Mammary epithelial cell (primary cell): ENCODE measurements at regions of chr4 and their contacts with region 1.

Region 1: DNA sequence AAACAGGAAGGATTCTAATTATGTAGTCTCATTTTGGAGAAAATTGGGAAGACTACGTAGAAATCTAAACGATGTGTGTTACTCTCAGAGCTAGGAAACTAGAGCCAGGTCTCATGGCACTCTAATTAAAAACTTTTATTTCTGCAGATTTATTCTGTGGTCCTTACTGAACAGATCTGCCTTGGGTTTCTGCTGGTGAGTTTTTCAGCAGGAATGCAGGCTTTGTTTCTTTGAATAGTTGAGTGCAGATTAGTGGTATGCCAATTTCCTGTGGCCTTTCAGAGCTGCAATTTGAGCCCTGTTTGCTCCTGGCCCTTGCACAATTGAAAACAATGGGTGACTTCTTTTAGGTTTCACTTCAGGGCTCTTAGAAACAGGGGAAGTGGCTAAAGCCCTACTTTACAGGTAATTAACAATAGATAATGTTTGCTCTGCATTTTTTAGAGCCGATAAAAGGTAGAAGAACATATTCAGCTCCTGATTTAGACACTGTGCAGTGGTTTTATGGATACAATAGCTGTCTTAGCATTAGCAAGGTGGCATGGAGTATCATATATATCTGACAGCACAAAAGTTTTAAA is 21.8 kb downstream of the SPRY1 start:
- DNase-seq: peak; percentile 93
- H3K4me3 ChIP-seq: peak overlapping the region in 2 of 3 experiments; percentile 20 to 34
- H3K27ac ChIP-seq: peak overlapping the region; percentile 84
- H3K4me1 ChIP-seq: peaks cover 26% of the 10 kb centered on the region
- H3K27me3 ChIP-seq: no peaks in the 10 kb centered on the region
- CTCF ChIP-seq: no peak

Region 2: GRCh38 chr4:123380728-123381716 is 37.4 kb before region 1 on chr4:
- CTCF ChIA-PET with region 1: no interaction called
- dilution Hi-C with region 1: no loop called
- in situ Hi-C with region 1: no loop called
- intact Hi-C with region 1: no loop called
- DNase-seq: no peak
- H3K4me3 ChIP-seq: no peak overlapping the region
- H3K27ac ChIP-seq: no peak overlapping the region
- H3K4me1 ChIP-seq: no peaks in the 10 kb centered on the region
- H3K27me3 ChIP-seq: no peaks in the 10 kb centered on the region
- CTCF ChIP-seq: no peak

Region 3: DNA sequence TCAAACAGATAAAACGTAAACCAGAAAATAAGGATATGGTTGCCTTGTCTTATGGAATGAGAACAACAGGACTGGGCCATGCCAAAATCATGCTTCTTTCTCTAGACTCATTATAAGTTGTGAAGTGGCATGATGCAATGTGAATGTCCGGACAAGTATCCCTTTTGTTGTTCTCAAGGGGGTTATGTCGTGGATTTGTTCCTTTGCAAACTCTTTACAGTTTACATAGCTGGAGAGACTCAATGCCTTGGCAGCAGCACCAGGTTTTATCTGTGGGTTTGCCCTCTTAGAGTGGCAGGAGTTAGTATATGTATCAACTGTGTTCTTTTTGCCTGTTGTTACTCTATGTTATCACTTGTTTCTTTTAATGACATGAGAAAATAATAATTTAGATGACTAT is 19.6 kb after region 1 on chr4:
- CTCF ChIA-PET with region 1: no interaction called
- dilution Hi-C with region 1: no loop called
- in situ Hi-C with region 1: no loop called
- intact Hi-C with region 1: no loop called
- DNase-seq: no peak
- H3K4me3 ChIP-seq: no peak overlapping the region
- H3K27ac ChIP-seq: no peak overlapping the region
- H3K4me1 ChIP-seq: no peaks in the 10 kb centered on the region
- H3K27me3 ChIP-seq: no peaks in the 10 kb centered on the region
- CTCF ChIP-seq: no peak

Region 4: DNA sequence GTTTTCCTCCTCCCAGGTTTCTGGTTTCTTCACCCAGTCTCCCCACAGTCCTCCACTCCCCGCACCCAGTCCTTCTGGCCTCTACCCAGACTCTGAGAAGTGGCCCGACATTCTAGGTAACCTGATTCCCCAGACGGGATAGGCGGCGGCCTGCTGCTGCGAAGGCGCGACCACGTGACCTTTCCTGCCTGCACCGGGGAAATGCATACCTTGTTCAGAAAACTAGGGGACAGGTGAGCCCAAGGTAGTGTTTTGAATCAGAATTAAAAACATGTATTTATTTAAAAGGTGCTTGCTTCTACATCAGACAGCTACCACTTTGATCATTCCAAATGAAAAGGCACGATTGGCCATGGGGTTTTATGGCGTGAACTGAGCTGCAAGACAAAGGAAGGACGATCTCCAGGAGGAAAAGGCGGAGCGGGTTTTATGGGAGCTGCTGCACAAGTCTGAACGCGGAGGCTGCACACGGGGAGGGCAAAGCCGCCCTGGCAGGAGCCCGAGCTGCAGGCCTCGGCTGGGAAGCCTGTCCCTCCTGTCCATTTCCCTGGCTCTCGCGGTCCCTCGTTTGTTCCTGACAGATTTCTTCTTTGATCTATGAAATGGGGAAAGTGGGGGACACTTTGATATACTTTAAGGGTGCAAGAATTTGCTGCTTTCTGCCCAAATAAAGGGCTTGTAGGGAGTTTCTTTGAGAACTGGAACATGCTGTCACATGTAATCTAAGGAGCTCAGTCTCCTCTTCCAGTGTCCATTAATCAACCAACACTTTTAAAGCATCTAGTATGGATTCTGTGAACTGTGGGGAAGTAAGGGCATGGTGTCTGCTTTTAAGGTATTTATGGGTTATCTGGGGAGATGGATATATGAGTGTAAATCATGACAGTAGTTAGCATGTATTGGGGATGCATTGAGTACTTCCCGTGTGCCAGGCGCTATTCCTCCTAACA is 129.1 kb after region 1 on chr4:
- CTCF ChIA-PET with region 1: no interaction called
- dilution Hi-C with region 1: no loop called
- in situ Hi-C with region 1: loop called in 1 of 2 experiments (anchors 10 kb)
- intact Hi-C with region 1: no loop called
- DNase-seq: peak; percentile 56
- H3K4me3 ChIP-seq: peak overlapping the region in 1 of 3 experiments; percentile 4
- H3K27ac ChIP-seq: no peak overlapping the region
- H3K4me1 ChIP-seq: peaks cover 29% of the 10 kb centered on the region
- H3K27me3 ChIP-seq: no peaks in the 10 kb centered on the region
- CTCF ChIP-seq: no peak

Region 5: DNA sequence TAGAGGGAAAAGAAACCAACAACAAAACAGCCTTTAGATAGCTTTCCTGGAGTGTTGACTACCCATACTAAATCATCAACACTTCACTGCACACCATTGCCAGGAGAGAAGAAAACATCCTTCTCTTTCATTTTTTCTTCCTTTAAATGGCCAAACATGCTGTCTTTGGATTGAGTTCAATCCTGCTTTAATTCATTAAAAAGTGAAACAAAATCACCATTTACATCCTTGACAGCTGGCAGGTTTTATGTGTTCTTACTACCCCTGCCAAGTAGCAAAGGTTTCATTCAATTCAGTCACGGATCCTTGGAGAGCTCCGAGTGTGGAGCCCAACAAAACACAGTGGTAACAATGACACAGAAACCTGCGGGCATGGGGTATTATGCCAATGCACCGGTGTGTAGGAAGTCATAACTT is 725.8 kb after region 1 on chr4:
- CTCF ChIA-PET with region 1: no interaction called
- dilution Hi-C with region 1: no loop called
- in situ Hi-C with region 1: no loop called
- intact Hi-C with region 1: no loop called
- DNase-seq: peak; percentile 17
- H3K4me3 ChIP-seq: peak overlapping the region in 1 of 3 experiments; percentile 3
- H3K27ac ChIP-seq: no peak overlapping the region
- H3K4me1 ChIP-seq: no peaks in the 10 kb centered on the region
- H3K27me3 ChIP-seq: no peaks in the 10 kb centered on the region
- CTCF ChIP-seq: no peak